Activated CD4-positive, alpha-beta T cell treated with anti-CD3 and anti-CD28 coated beads, Interleukin-2, amount 10 ng/mL, durations not matched to agents 24 days and 14 days (primary cell): ENCODE measurements at regions of chr1 and their contacts with region 1.

Region 1: GRCh38 chr1:100198596-100198995 is 20.5 kb upstream of the LRRC39 start:
- DNase-seq: no peak
- H3K4me3 Mint-ChIP-seq: no peak overlapping the region
- H3K27ac Mint-ChIP-seq: no peak overlapping the region
- H3K4me1 Mint-ChIP-seq: peaks cover 2% of the 10 kb centered on the region
- H3K27me3 Mint-ChIP-seq: no peaks in the 10 kb centered on the region

Region 2: GRCh38 chr1:100222428-100222827 is 23.8 kb after region 1 on chr1:
- intact Hi-C with region 1: loop called (anchors 2 kb)
- DNase-seq: no peak
- H3K4me3 Mint-ChIP-seq: no peak overlapping the region
- H3K27ac Mint-ChIP-seq: no peak overlapping the region
- H3K4me1 Mint-ChIP-seq: peaks cover 4% of the 10 kb centered on the region
- H3K27me3 Mint-ChIP-seq: no peaks in the 10 kb centered on the region

Region 3: DNA sequence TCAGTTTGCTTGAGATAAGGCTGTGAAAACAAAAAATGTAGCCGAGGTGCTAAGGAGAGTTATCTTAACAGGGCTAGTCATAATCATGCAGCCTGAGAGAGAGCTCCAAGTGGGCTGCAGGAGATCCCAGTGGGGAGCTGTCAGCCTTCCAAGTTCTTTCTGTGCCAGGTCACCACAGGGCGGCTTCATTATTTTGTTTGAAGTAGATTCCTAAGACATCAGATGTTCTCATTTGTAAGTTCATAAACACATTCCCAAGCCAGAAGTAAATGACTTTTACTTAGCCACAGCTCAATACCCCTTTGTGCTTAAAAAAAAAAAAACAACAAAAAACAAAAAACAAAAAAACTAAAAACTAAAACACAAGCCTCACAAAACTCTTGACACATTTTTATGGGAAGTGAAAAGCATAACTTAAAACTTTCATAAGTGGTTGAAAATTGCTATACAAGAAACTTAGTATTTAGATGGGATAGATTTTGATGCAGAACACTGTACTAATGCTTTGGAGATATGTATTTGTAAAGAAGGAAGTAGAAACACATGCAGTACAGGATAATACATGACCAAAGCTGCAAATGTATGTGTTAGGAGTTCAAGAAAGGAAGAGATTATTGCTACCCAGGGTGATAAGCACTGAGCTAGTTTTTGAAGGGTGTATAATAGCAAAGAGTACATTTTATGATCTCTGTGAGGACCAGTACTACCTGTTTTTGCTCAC is 162.4 kb after region 1 on chr1:
- intact Hi-C with region 1: no loop called
- DNase-seq: no peak
- H3K4me3 Mint-ChIP-seq: no peak overlapping the region
- H3K27ac Mint-ChIP-seq: no peak overlapping the region
- H3K4me1 Mint-ChIP-seq: peaks cover 54% of the 10 kb centered on the region
- H3K27me3 Mint-ChIP-seq: no peaks in the 10 kb centered on the region